Activated B cell treated with CpG ODN at 0.5 μM for 24 hours (primary cell): ENCODE measurements at regions of chrX and their contacts with region 1.

Region 1: DNA sequence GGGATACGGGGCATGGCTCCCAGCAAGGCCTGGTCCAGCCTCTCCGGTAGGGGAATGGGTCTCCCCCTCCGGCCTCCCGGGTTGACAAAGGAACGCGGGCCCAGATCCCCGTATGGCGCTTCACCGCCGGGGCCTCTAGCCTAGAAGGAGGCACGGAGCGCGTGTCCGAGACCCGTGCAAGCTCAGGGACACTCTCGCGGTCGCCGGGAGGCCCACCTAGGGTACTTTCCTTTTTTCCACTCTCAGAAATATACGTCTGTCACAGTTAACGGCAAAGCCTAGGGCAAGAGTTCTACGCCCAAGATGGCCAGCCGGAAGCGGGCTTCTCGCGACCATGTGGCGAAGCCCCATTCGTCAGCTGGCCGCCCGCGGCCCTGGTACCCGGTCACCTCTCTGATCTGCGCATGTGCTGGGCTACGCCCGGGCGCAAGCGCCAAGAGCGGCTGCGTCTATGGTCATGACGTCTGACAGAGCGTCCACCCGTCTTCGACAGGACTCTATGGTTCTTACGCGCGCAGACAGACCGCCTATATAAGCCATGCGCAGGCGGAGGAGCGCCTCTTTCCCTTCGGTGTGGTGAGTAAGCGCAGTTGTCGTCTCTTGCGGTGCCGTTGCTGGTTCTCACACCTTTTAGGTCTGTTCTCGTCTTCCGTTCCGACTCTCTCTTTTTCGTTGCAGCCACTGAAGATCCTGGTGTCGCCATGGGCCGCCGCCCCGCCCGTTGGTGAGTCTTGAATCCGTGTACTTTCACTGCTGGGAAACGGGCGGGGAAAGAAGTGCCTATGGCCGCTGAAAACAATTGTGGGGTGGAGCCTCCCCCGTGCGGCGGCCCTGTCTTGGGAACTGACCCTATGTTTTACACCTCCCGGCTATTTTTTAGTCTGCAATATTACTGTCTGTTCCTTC is at the start of gene RPL10:
- DNase-seq: peak; percentile 76
- ATAC-seq: peak; percentile 75
- H3K4me3 Mint-ChIP-seq: peak within 1 kb of the TSS; percentile 97
- H3K27ac Mint-ChIP-seq: peak within 1 kb of the TSS; percentile 99
- H3K4me1 Mint-ChIP-seq: peaks cover 26% of the 10 kb centered on the region
- H3K27me3 Mint-ChIP-seq: no peaks in the 10 kb centered on the region
- CTCF ChIP-seq: no peak
- total RNA-seq, gene RPL10: 5,113 and 5,534 TPM in 2 replicates

Region 2: GRCh38 chrX:154378782-154379591 is 19.1 kb before region 1 on chrX and contains the start of gene EMD:
- CTCF ChIA-PET with region 1: interaction called, 3 read pairs
- POLR2A ChIA-PET with region 1: interaction called, 20 read pairs
- intact Hi-C with region 1: no loop called
- DNase-seq: peak; percentile 87
- ATAC-seq: peak; percentile 83
- H3K4me3 Mint-ChIP-seq: peak within 1 kb of the TSS; percentile 83
- H3K27ac Mint-ChIP-seq: peak within 1 kb of the TSS; percentile 83
- H3K4me1 Mint-ChIP-seq: peaks cover 18% of the 10 kb centered on the region
- H3K27me3 Mint-ChIP-seq: no peaks in the 10 kb centered on the region
- CTCF ChIP-seq: no peak
- total RNA-seq, gene EMD: 68.4 and 70.2 TPM in 2 replicates

Region 3: DNA sequence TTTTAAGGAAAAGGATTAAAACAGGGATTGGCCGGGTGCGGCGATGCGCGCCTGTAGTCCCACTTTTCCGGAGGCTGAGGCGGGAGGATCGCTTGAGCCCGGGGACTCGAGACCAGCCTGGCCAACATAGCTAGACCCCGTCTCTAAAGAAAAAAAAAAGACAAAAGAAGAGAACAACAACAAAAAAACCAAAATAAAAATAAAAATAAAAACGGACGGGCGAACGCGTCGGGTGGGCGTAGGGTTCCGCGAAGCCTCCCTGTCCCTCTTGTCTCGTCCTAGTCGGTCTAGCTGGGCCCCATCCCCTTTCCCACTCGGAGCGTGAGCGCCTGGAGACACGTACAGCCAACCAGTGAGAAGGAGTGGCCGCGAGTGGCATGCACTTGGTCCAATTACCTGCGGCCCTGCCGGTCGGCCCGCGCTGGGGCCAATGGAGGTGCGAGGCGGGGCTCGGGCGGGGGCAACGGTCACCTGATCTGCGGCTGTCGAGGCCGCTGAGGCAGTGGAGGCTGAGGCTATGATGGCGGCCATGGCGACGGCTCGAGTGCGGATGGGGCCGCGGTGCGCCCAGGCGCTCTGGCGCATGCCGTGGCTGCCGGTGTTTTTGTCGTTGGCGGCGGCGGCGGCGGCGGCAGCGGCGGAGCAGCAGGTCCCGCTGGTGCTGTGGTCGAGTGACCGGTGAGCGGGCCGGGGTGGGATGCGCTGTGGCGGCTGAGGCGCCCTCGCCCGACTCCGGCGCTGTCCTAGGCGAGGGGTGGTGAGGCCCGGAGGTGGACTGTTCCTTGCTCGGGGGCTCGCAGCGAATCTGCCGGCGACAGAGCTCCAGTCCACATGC is 30.3 kb after region 1 on chrX and contains the start of gene ATP6AP1:
- CTCF ChIA-PET with region 1: interaction called, 4 read pairs
- POLR2A ChIA-PET with region 1: interaction called, 20 read pairs
- intact Hi-C with region 1: no loop called
- DNase-seq: peak; percentile 77
- ATAC-seq: peak; percentile 99
- H3K4me3 Mint-ChIP-seq: peak within 1 kb of the TSS; percentile 81
- H3K27ac Mint-ChIP-seq: peak within 1 kb of the TSS; percentile 71
- H3K4me1 Mint-ChIP-seq: peaks cover 23% of the 10 kb centered on the region
- H3K27me3 Mint-ChIP-seq: no peaks in the 10 kb centered on the region
- CTCF ChIP-seq: no peak
- total RNA-seq, gene ATP6AP1: 36.6 and 38.8 TPM in 2 replicates

Region 4: DNA sequence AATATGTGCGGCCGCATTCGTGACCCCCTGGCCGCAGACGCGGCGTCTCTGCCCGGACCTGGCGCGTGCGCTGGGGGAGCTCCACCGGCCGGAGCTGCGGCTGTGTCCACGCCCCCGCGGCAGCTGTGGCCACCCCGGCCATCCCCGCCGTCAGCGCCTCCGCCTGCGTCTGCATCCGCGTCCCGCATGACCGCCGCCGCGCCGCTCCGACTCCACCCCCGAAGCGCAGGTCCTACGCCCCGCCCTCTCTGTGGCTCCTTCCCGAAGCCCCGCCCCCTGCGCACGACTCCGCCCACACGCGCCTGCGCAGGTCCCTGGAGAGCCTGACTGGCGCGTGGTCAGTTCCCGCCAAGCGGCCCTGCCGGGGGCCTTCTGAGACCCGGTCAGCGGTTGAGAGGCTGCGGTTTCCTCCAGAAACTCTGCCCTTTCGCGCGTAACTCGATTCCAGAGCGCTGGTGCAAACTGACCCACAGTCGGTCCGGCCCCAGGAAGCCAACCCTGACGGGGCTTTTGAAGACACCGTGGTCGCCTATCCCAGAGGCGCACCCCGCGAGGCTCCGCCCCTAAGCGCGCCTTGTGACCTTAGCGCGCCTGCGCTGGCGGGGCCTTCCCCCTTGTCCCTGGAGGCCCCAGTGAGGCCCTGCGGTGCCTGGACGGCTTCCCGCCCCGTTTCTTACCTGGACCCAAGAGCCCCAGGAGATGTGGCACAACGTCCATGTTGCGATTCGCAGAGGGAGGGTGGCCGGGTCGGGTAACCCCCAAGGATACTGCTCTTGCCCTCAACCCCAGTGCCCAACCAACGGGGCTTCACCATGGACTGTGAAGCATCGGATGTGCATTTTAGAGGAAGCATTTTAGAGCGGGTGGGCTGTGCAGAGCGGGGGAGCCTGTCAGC is 80.9 kb after region 1 on chrX and contains the start of gene LAGE3:
- CTCF ChIA-PET with region 1: interaction called, 3 read pairs
- POLR2A ChIA-PET with region 1: interaction called, 5 read pairs
- intact Hi-C with region 1: loop called (anchors 5 kb)
- DNase-seq: peak; percentile 95
- ATAC-seq: peak; percentile 90
- H3K4me3 Mint-ChIP-seq: peak within 1 kb of the TSS; percentile 80
- H3K27ac Mint-ChIP-seq: peak within 1 kb of the TSS; percentile 88
- H3K4me1 Mint-ChIP-seq: peaks cover 23% of the 10 kb centered on the region
- H3K27me3 Mint-ChIP-seq: no peaks in the 10 kb centered on the region
- CTCF ChIP-seq: no peak
- total RNA-seq, gene LAGE3: 16.6 and 18.9 TPM in 2 replicates

Region 5: GRCh38 chrX:154534862-154535670 is 137.0 kb after region 1 on chrX:
- CTCF ChIA-PET with region 1: no interaction called
- POLR2A ChIA-PET with region 1: interaction called, 20 read pairs
- intact Hi-C with region 1: loop called (anchors 5 kb)
- DNase-seq: peak; percentile 77
- ATAC-seq: peak; percentile 96
- H3K4me3 Mint-ChIP-seq: no peak overlapping the region
- H3K27ac Mint-ChIP-seq: peak overlapping the region; percentile 50
- H3K4me1 Mint-ChIP-seq: peaks cover 3% of the 10 kb centered on the region
- H3K27me3 Mint-ChIP-seq: no peaks in the 10 kb centered on the region
- CTCF ChIP-seq: peak; percentile 30